ENCODE measurements at regions of chr3 and their contacts with region 1.

Region 1: GRCh38 chr3:98445949-98446406 is 17.0 kb upstream of the OR5K1 start:
- DNase-seq: peak; percentile 99
- H3K4me3 ChIP-seq: peak overlapping the region; percentile 7 to 45 (median 22)
- H3K27ac ChIP-seq: peak overlapping the region; percentile 67
- H3K4me1 ChIP-seq: peaks cover 18% of the 10 kb centered on the region
- H3K27me3 ChIP-seq: no peaks in the 10 kb centered on the region
- CTCF ChIP-seq: no peak

Region 2: GRCh38 chr3:98406034-98406433 is 39.9 kb before region 1 on chr3:
- CTCF ChIA-PET with region 1: no interaction called
- dilution Hi-C with region 1: no loop called
- in situ Hi-C with region 1: no loop called
- intact Hi-C with region 1: no loop called
- DNase-seq: no peak
- H3K4me3 ChIP-seq: no peak overlapping the region
- H3K27ac ChIP-seq: no peak overlapping the region
- H3K4me1 ChIP-seq: no peaks in the 10 kb centered on the region
- H3K27me3 ChIP-seq: no peaks in the 10 kb centered on the region
- CTCF ChIP-seq: no peak

Region 3: GRCh38 chr3:98483130-98483482 is 37.1 kb after region 1 on chr3:
- CTCF ChIA-PET with region 1: no interaction called
- dilution Hi-C with region 1: no loop called
- in situ Hi-C with region 1: no loop called
- intact Hi-C with region 1: loop called (anchors 1 kb)
- DNase-seq: peak; percentile 77
- H3K4me3 ChIP-seq: no peak overlapping the region
- H3K27ac ChIP-seq: peak overlapping the region; percentile 49
- H3K4me1 ChIP-seq: peaks cover 19% of the 10 kb centered on the region
- H3K27me3 ChIP-seq: no peaks in the 10 kb centered on the region
- CTCF ChIP-seq: no peak

Region 4: DNA sequence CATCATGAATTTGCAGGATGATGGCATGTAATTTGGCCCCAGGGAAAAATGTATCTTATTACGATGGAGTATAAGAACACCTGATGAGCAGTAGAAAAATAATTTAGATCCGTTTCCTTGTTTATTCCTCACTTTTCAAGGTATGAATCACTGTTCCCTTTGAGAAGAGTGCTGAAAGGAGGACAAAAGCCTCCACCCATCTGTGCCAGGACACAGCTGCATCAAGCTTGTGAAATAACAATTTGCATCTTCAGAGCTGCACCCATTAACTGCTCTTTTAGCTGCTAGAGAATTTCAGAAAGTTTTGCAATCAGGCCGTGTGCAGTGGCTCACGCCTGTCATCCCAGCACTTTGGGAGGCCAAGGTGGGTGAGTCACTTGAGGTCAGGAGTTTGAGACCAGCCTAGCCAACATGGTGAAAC is 67.1 kb after region 1 on chr3:
- CTCF ChIA-PET with region 1: no interaction called
- dilution Hi-C with region 1: no loop called
- in situ Hi-C with region 1: no loop called
- intact Hi-C with region 1: loop called (anchors 2 kb)
- DNase-seq: peak; percentile 92
- H3K4me3 ChIP-seq: no peak overlapping the region
- H3K27ac ChIP-seq: peak overlapping the region; percentile 33
- H3K4me1 ChIP-seq: peaks cover 20% of the 10 kb centered on the region
- H3K27me3 ChIP-seq: no peaks in the 10 kb centered on the region
- CTCF ChIP-seq: no peak

Measured in mammary epithelial cell (primary cell).